Vagina (tissue), 2 donors: ENCODE measurements at regions of chr22 and their contacts with region 1.

Region 1: GRCh38 chr22:30027169-30027568 is 53.1 kb upstream of the HORMAD2 start:
- DNase-seq: no peak
- H3K4me3 ChIP-seq: no peak overlapping the region
- H3K27ac ChIP-seq: no peak overlapping the region
- H3K4me1 ChIP-seq: peaks cover 8% of the 10 kb centered on the region
- H3K27me3 ChIP-seq: no peaks in the 10 kb centered on the region
- CTCF ChIP-seq: no peak
- POLR2A ChIP-seq: no peak

Region 2: DNA sequence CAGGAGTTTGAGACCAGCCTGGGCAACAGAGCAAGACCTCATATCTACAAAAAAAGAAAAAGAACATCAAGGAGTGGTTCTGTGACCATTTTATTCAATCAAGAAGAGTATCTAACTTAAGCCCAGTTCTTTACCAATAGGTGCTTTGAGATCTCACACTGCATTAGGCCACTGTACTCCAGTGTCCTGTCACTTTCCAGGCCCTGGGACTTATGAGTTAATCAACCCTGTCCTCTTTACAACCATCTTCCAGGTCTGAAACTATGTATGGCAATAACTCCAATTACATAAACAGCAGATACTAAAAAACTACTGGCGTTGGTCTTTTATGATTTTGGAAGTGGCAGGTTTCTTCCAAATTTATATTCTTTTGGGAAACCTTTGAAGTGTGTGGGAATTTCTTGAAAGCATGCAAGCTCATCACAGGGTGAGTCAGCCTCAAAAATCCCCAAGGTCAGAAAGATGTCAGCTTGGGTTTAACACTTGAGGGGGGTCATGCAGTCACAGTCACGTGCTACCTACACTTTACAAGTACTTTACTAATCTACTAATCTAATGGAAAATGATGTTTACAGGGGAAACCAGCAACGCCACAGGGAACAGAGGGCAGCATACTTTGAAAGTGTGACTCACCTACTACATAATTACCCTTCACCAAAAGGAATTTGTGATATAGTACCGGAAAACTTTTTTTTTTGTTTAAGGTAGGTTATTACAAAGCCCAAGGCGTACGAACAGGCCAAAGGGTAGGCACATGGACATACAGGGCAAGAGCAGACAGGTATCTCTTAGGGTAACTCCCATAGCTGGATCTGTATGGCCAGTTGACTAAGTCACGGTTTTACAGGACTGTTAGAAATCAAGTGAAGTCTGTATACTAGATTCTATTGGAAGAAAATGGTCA is 1619.3 kb after region 1 on chr22:
- intact Hi-C with region 1: loop called (anchors 10 kb)
- DNase-seq: no peak
- H3K4me3 ChIP-seq: no peak overlapping the region
- H3K27ac ChIP-seq: no peak overlapping the region
- H3K4me1 ChIP-seq: no peaks in the 10 kb centered on the region
- H3K27me3 ChIP-seq: no peaks in the 10 kb centered on the region
- CTCF ChIP-seq: no peak
- POLR2A ChIP-seq: no peak